ENCODE measurements at regions of chr7 and their contacts with region 1.

Region 1: DNA sequence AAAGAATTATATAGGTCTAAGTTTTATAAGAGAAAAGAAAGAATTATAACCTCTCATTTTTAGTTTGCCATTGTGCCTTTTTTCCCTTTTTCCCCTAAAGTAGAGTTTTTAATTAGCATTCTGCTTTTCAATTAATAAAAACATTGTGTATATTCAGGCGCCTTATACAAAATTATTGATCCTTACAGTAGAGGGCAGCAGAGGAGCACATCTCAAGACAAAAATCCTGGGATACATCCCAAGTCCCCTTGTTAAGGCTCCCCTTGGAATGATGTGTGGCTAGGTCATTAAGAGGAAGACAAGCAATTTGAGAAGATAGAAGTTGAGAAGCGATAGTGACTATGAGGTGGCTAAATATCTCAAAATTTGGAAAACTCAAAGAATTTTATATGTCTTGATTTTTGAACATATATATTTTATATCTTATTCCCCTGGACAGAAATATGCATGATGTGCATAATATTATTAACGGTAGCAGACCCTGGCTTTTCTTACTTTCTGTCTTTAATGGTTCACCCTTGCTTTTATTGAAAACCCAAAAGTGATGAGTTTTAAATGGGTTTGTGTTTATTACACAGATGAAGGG is 19.1 kb upstream of the TPK1 start:
- DNase-seq: peak in 1 of 2 experiments; percentile 53
- H3K4me3 ChIP-seq: no peak overlapping the region
- H3K4me3 Mint-ChIP-seq: no peak overlapping the region
- H3K27ac Mint-ChIP-seq: no peak overlapping the region
- H3K4me1 ChIP-seq: peaks cover 28% of the 10 kb centered on the region
- H3K4me1 Mint-ChIP-seq: peaks cover 23% of the 10 kb centered on the region
- H3K27me3 ChIP-seq: no peaks in the 10 kb centered on the region
- H3K27me3 Mint-ChIP-seq: no peaks in the 10 kb centered on the region
- CTCF ChIP-seq: peak; percentile 56 to 70

Region 2: GRCh38 chr7:144670218-144670617 is 184.7 kb before region 1 on chr7:
- CTCF ChIA-PET with region 1: no interaction called
- POLR2A ChIA-PET with region 1: no interaction called
- intact Hi-C with region 1: loop called (anchors 5 kb)
- DNase-seq: peak in 1 of 2 experiments; percentile 11
- H3K4me3 ChIP-seq: no peak overlapping the region
- H3K4me3 Mint-ChIP-seq: no peak overlapping the region
- H3K27ac Mint-ChIP-seq: no peak overlapping the region
- H3K4me1 ChIP-seq: no peaks in the 10 kb centered on the region
- H3K4me1 Mint-ChIP-seq: peaks cover 4% of the 10 kb centered on the region
- H3K27me3 ChIP-seq: no peaks in the 10 kb centered on the region
- H3K27me3 Mint-ChIP-seq: no peaks in the 10 kb centered on the region
- CTCF ChIP-seq: peak; percentile 13 to 33

Region 3: GRCh38 chr7:144827621-144828020 is 27.3 kb before region 1 on chr7:
- CTCF ChIA-PET with region 1: no interaction called
- POLR2A ChIA-PET with region 1: no interaction called
- intact Hi-C with region 1: loop called (anchors 2 kb)
- DNase-seq: peak; percentile 83 to 89
- H3K4me3 ChIP-seq: no peak overlapping the region
- H3K4me3 Mint-ChIP-seq: peak overlapping the region; percentile 59
- H3K27ac Mint-ChIP-seq: peak overlapping the region; percentile 69
- H3K4me1 ChIP-seq: peaks cover 58% of the 10 kb centered on the region
- H3K4me1 Mint-ChIP-seq: peaks cover 25% of the 10 kb centered on the region
- H3K27me3 ChIP-seq: no peaks in the 10 kb centered on the region
- H3K27me3 Mint-ChIP-seq: no peaks in the 10 kb centered on the region
- CTCF ChIP-seq: no peak

Region 4: DNA sequence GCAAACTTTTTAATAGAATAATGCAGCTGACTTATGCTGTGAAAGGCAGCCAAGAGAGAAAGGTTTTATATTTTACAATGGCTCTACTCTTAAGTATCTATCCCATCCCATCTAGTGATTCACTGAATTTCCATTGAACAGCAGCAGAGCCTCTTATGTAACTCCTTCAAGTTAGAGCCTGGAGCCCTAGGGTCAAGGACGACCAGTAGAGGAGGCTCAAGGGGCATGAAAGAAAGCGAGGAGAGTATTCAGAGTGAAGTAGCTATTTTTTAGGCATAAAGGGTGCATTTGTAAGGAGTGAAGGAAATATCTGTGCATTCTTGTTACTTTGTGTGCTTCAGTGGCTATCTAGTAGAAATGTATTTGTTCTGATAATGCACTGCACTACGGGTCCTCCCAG is 161.1 kb after region 1 on chr7:
- CTCF ChIA-PET with region 1: no interaction called
- POLR2A ChIA-PET with region 1: no interaction called
- intact Hi-C with region 1: loop called (anchors 1 kb)
- DNase-seq: peak; percentile 24 to 38
- H3K4me3 ChIP-seq: no peak overlapping the region
- H3K4me3 Mint-ChIP-seq: peak overlapping the region; percentile 41
- H3K27ac Mint-ChIP-seq: no peak overlapping the region
- H3K4me1 ChIP-seq: no peaks in the 10 kb centered on the region
- H3K4me1 Mint-ChIP-seq: no peaks in the 10 kb centered on the region
- H3K27me3 ChIP-seq: no peaks in the 10 kb centered on the region
- H3K27me3 Mint-ChIP-seq: no peaks in the 10 kb centered on the region
- CTCF ChIP-seq: peak in 1 of 2 experiments; percentile 44

Region 5: DNA sequence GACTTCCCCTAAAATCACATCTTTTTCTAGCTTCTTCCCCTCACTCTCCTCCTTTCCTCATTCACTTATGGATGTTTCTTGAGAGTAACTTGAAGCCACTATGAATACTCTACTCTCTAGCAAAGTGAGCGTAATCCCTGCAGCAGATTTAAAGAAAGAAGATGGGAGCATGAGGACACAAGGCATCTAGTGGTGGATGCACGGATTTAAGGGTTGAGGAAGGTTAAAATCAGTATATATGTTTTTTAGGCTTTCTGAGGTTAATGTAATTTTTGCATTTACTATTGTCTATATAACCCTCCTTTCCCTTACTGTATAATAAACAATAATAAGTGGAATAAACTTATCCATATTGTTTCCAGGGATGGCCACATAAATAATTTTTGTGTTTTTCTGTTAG is 476.1 kb after region 1 on chr7:
- CTCF ChIA-PET with region 1: no interaction called
- POLR2A ChIA-PET with region 1: no interaction called
- intact Hi-C with region 1: loop called (anchors 1 kb)
- DNase-seq: no peak
- H3K4me3 ChIP-seq: no peak overlapping the region
- H3K4me3 Mint-ChIP-seq: no peak overlapping the region
- H3K27ac Mint-ChIP-seq: no peak overlapping the region
- H3K4me1 ChIP-seq: no peaks in the 10 kb centered on the region
- H3K4me1 Mint-ChIP-seq: no peaks in the 10 kb centered on the region
- H3K27me3 ChIP-seq: no peaks in the 10 kb centered on the region
- H3K27me3 Mint-ChIP-seq: no peaks in the 10 kb centered on the region
- CTCF ChIP-seq: peak; percentile 42 to 43

Region 6: GRCh38 chr7:145382762-145383161 is 527.8 kb after region 1 on chr7:
- CTCF ChIA-PET with region 1: no interaction called
- POLR2A ChIA-PET with region 1: no interaction called
- intact Hi-C with region 1: no loop called
- DNase-seq: no peak
- H3K4me3 ChIP-seq: no peak overlapping the region
- H3K4me3 Mint-ChIP-seq: no peak overlapping the region
- H3K27ac Mint-ChIP-seq: no peak overlapping the region
- H3K4me1 ChIP-seq: no peaks in the 10 kb centered on the region
- H3K4me1 Mint-ChIP-seq: no peaks in the 10 kb centered on the region
- H3K27me3 ChIP-seq: no peaks in the 10 kb centered on the region
- H3K27me3 Mint-ChIP-seq: no peaks in the 10 kb centered on the region
- CTCF ChIP-seq: no peak

Measured in Caco-2 (cell line).